ENCODE measurements at regions of chr9 and their contacts with region 1.

Region 1: GRCh38 chr9:124320062-124320973 is 62.6 kb downstream of the NEK6 start:
- DNase-seq: peak; percentile 68 to 76 (median 72)
- ATAC-seq: peak; percentile 85
- H3K4me3 ChIP-seq: no peak overlapping the region
- H3K27ac ChIP-seq: no peak overlapping the region
- H3K4me1 ChIP-seq: no peaks in the 10 kb centered on the region
- H3K27me3 ChIP-seq: no peaks in the 10 kb centered on the region
- CTCF ChIP-seq: peak; percentile 65 to 86 (median 81)
- POLR2A ChIP-seq: no peak

Region 2: GRCh38 chr9:124133727-124134126 is 186.6 kb before region 1 on chr9:
- intact Hi-C with region 1: loop called (anchors 5 kb)
- DNase-seq: peak; percentile 31 to 63 (median 56)
- ATAC-seq: peak; percentile 77
- H3K4me3 ChIP-seq: no peak overlapping the region
- H3K27ac ChIP-seq: no peak overlapping the region
- H3K4me1 ChIP-seq: no peaks in the 10 kb centered on the region
- H3K27me3 ChIP-seq: no peaks in the 10 kb centered on the region
- CTCF ChIP-seq: peak in 6 of 7 experiments; percentile 13 to 60 (median 34)
- POLR2A ChIP-seq: no peak

Region 3: GRCh38 chr9:124370896-124371582 is 50.7 kb after region 1 on chr9:
- intact Hi-C with region 1: loop called (anchors 5 kb)
- DNase-seq: no peak
- ATAC-seq: no peak
- H3K4me3 ChIP-seq: no peak overlapping the region
- H3K27ac ChIP-seq: no peak overlapping the region
- H3K4me1 ChIP-seq: peaks cover 8% of the 10 kb centered on the region
- H3K27me3 ChIP-seq: no peaks in the 10 kb centered on the region
- CTCF ChIP-seq: no peak
- POLR2A ChIP-seq: no peak